CD4-positive, alpha-beta memory T cell (primary cell): ENCODE measurements at regions of chr5 and their contacts with region 1.

Region 1: DNA sequence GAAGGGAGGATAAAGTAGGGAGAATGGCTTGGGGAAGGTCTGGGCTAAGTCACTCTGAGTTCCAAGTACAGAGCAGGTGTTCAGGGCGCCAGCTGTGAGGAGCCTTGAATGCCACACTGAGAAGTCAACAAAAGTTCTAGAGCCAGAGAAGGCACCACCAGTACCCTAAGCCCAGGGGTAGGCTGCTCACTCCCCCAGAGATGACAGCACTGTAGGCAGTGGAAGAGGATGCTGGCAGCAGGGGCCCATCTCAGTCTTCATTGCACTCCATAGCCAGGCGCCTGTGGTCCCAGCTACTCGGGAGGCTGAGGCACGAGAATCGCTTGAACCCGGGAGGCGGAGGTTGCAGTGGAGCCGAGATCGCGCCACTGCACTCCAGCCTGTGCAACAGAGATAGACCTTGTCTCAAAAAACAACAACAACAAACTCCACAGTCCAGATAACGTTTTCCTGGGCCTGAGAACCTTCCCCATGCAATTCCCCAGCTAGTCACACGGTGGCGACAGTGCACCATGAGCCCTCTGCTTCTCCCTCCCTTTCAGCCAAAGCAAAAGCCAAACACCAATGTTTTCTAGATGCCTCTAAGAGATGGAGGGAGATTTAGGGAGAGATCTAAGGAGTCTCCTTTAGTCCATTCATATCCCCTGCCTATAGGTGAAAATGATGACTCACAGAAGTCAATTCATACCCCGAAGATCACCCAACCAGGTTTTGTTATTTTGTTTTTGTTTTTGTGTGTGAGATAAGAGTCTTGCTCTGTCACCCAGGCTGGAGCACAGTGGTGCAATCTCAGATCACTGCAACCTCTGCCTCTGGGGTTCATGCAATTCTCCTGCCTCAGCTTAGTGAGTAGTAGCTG is 19.8 kb upstream of the NSD1 start:
- DNase-seq: peak; percentile 71 to 80 (median 76)
- H3K4me3 ChIP-seq: no peak overlapping the region
- H3K4me3 Mint-ChIP-seq: peak overlapping the region in 1 of 8 donors; percentile 24
- H3K27ac ChIP-seq: no peak overlapping the region
- H3K27ac Mint-ChIP-seq: peak overlapping the region in 2 of 7 donors; percentile 31 to 59
- H3K4me1 ChIP-seq: peaks cover 26% of the 10 kb centered on the region
- H3K4me1 Mint-ChIP-seq: peaks cover 11 to 28% (median 17%) of the 10 kb centered on the region in 4 donors
- H3K27me3 ChIP-seq: no peaks in the 10 kb centered on the region
- H3K27me3 Mint-ChIP-seq: no peaks in the 10 kb centered on the region

Region 2: DNA sequence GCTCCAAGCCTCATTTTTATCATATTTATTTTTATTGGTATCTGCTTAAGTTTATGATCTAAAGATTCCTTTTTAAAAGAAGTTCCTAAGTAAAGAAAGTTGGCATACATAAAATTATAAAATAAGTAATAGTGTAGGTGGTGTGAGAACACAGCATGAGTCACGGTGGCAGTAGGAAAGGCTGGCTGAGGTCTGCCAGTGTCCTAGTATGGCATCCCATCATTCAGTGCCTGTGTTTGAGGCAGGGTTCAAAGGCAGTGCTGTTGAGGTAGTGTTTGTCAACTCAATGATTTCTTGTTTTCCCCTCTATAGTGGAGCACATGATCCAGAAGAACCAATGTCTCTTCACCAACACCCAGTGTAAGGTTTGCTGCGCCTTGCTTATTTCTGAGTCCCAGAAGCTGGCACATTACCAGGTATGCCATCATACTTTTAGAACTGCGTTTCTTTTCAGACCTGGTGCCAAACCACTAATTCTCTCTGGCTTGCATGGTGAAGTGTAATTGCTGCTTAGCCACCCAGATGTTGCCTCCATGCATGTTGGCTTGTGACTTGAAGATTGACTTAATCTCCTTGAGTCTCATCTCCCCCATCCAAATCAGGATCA is 72.9 kb before region 1 on chr5:
- CTCF ChIA-PET with region 1: no interaction called
- POLR2A ChIA-PET with region 1: no interaction called
- intact Hi-C with region 1: no loop called
- DNase-seq: no peak
- H3K4me3 ChIP-seq: no peak overlapping the region
- H3K4me3 Mint-ChIP-seq: no peak overlapping the region
- H3K27ac ChIP-seq: no peak overlapping the region
- H3K27ac Mint-ChIP-seq: peak overlapping the region in 1 of 7 donors; percentile 37
- H3K4me1 ChIP-seq: no peaks in the 10 kb centered on the region
- H3K4me1 Mint-ChIP-seq: peaks cover 7 to 10% (median 7%) of the 10 kb centered on the region in 4 donors
- H3K27me3 ChIP-seq: no peaks in the 10 kb centered on the region
- H3K27me3 Mint-ChIP-seq: no peaks in the 10 kb centered on the region

Region 3: DNA sequence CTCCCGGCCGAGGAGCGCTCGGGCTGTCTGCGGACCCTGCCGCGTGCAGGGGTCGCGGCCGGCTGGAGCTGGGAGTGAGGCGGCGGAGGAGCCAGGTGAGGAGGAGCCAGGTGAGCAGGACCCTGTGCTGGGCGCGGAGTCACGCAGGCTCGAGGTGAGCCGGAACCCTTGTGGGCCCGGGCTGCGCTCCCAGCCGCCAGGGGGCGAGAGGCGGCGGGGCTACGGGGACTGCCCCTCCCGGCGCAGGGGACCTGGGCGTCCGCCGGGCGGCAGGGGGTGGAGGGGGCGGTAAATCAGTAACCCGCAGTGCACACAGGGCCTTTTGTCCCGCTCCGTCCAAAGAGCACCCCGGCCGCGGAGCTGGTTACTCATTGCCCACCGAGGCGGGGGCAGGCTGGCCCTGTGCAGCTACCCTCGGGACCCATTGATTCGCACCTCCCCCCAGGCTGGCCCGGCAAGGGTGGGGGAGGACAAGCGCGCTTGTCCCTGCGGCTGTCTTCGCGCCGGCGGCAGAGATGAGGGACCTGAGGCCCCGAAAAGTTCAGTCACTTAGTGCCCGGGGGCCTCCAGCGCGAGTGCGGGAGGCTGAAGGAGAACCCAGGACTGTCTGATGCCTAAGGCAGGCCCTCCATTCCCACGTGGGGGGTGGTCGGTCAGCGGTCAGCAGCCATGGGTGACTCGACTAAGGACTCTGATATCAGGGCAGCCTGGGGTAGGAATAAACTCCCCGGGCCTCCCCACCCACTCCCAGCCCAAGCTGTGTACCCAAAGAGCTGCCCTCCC is 26.7 kb before region 1 on chr5:
- CTCF ChIA-PET with region 1: interaction called, 21 read pairs
- POLR2A ChIA-PET with region 1: no interaction called
- intact Hi-C with region 1: no loop called
- DNase-seq: peak; percentile 67 to 77 (median 75)
- H3K4me3 ChIP-seq: peak overlapping the region in 1 of 2 donors; percentile 50
- H3K4me3 Mint-ChIP-seq: peak overlapping the region in 2 of 8 donors; percentile 24 to 62
- H3K27ac ChIP-seq: no peak overlapping the region
- H3K27ac Mint-ChIP-seq: peak overlapping the region in 1 of 7 donors; percentile 47
- H3K4me1 ChIP-seq: peaks cover 8% of the 10 kb centered on the region
- H3K4me1 Mint-ChIP-seq: peaks cover 5 to 12% (median 6%) of the 10 kb centered on the region in 4 donors
- H3K27me3 ChIP-seq: no peaks in the 10 kb centered on the region
- H3K27me3 Mint-ChIP-seq: peaks cover 3 to 13% of the 10 kb centered on the region in 2 donors

Region 4: GRCh38 chr5:177204281-177204680 is 90.5 kb after region 1 on chr5:
- CTCF ChIA-PET with region 1: interaction called, 7 read pairs
- POLR2A ChIA-PET with region 1: interaction called, 3 read pairs
- intact Hi-C with region 1: loop called (anchors 5 kb)
- DNase-seq: no peak
- H3K4me3 ChIP-seq: no peak overlapping the region
- H3K4me3 Mint-ChIP-seq: no peak overlapping the region
- H3K27ac ChIP-seq: no peak overlapping the region
- H3K27ac Mint-ChIP-seq: peak overlapping the region in 5 of 7 donors; percentile 22 to 93 (median 42)
- H3K4me1 ChIP-seq: peaks cover 4% of the 10 kb centered on the region
- H3K4me1 Mint-ChIP-seq: peaks cover 0 to 12% (median 9%) of the 10 kb centered on the region in 4 donors
- H3K27me3 ChIP-seq: no peaks in the 10 kb centered on the region
- H3K27me3 Mint-ChIP-seq: no peaks in the 10 kb centered on the region

Region 5: DNA sequence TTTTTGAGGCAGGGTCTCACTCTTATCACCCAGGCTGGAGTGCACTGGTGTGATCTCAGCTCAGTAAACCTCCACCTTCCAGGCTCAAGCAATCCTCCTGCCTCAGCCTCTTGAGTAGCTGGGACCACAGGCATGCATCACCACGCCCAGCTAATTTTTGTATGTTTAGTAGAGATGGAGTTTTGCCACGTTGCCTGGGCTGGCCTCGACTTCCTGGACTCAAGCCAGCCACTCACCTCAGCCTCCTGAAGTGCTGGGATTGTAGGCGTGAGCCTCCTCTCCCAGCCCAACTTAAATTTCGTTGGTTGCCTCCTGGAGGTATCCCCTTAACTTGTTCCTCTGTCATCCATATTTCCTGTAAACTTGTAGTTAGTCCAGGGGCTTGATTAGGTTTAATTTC is 142.5 kb after region 1 on chr5:
- CTCF ChIA-PET with region 1: interaction called, 29 read pairs
- POLR2A ChIA-PET with region 1: no interaction called
- intact Hi-C with region 1: loop called (anchors 5 kb)
- DNase-seq: no peak
- H3K4me3 ChIP-seq: no peak overlapping the region
- H3K4me3 Mint-ChIP-seq: no peak overlapping the region
- H3K27ac ChIP-seq: no peak overlapping the region
- H3K27ac Mint-ChIP-seq: peak overlapping the region in 1 of 7 donors; percentile 15
- H3K4me1 ChIP-seq: no peaks in the 10 kb centered on the region
- H3K4me1 Mint-ChIP-seq: peaks cover 4 to 10% (median 7%) of the 10 kb centered on the region in 4 donors
- H3K27me3 ChIP-seq: no peaks in the 10 kb centered on the region
- H3K27me3 Mint-ChIP-seq: no peaks in the 10 kb centered on the region

Region 6: GRCh38 chr5:177303121-177303924 is 189.5 kb after region 1 on chr5 and contains the starts of genes PRELID1 and RAB24:
- CTCF ChIA-PET with region 1: interaction called, 33 read pairs
- POLR2A ChIA-PET with region 1: interaction called, 4 read pairs
- intact Hi-C with region 1: loop called (anchors 2 kb)
- DNase-seq: peak; percentile 84 to 88 (median 86)
- H3K4me3 ChIP-seq: peak within 1 kb of the TSS; percentile 84 to 94
- H3K4me3 Mint-ChIP-seq: peak within 1 kb of the TSS; percentile 91 to 97 (median 95)
- H3K27ac ChIP-seq: peak within 1 kb of the TSS; percentile 78
- H3K27ac Mint-ChIP-seq: peak within 1 kb of the TSS; percentile 84 to 97 (median 92)
- H3K4me1 ChIP-seq: peaks cover 68% of the 10 kb centered on the region
- H3K4me1 Mint-ChIP-seq: peaks cover 48 to 86% (median 69%) of the 10 kb centered on the region in 4 donors
- H3K27me3 ChIP-seq: no peaks in the 10 kb centered on the region
- H3K27me3 Mint-ChIP-seq: no peaks in the 10 kb centered on the region
- total RNA-seq, gene PRELID1: 70.9 to 72.1 TPM
- total RNA-seq, gene RAB24: 19.8 to 20.5 TPM

Region 7: GRCh38 chr5:177497292-177498033 is 383.7 kb after region 1 on chr5 and contains the start of gene PDLIM7:
- CTCF ChIA-PET with region 1: interaction called, 3 read pairs
- POLR2A ChIA-PET with region 1: no interaction called
- intact Hi-C with region 1: loop called (anchors 2 kb)
- DNase-seq: peak; percentile 91 to 94 (median 92)
- H3K4me3 ChIP-seq: peak within 1 kb of the TSS; percentile 65 to 75
- H3K4me3 Mint-ChIP-seq: peak within 1 kb of the TSS; percentile 84 to 93 (median 88)
- H3K27ac ChIP-seq: peak within 1 kb of the TSS; percentile 49
- H3K27ac Mint-ChIP-seq: peak within 1 kb of the TSS; percentile 57 to 92 (median 85)
- H3K4me1 ChIP-seq: peaks cover 11% of the 10 kb centered on the region
- H3K4me1 Mint-ChIP-seq: peaks cover 8 to 26% (median 20%) of the 10 kb centered on the region in 4 donors
- H3K27me3 ChIP-seq: no peaks in the 10 kb centered on the region
- H3K27me3 Mint-ChIP-seq: no peaks in the 10 kb centered on the region
- total RNA-seq, gene PDLIM7: 5.8 to 7.3 TPM